Naive thymus-derived CD4-positive, alpha-beta T cell (primary cell): ENCODE measurements at regions of chr10 and their contacts with region 1.

Region 1: GRCh38 chr10:15897287-15897686 is 37.0 kb upstream of the MINDY3 start:
- DNase-seq: no peak
- ATAC-seq: no peak
- H3K4me3 ChIP-seq: no peak overlapping the region
- H3K4me3 Mint-ChIP-seq: no peak overlapping the region
- H3K27ac ChIP-seq: no peak overlapping the region
- H3K27ac Mint-ChIP-seq: no peak overlapping the region
- H3K4me1 ChIP-seq: no peaks in the 10 kb centered on the region
- H3K4me1 Mint-ChIP-seq: no peaks in the 10 kb centered on the region
- H3K27me3 ChIP-seq: no peaks in the 10 kb centered on the region
- H3K27me3 Mint-ChIP-seq: peaks cover 17 to 55% (median 50%) of the 10 kb centered on the region in 5 donors

Region 2: DNA sequence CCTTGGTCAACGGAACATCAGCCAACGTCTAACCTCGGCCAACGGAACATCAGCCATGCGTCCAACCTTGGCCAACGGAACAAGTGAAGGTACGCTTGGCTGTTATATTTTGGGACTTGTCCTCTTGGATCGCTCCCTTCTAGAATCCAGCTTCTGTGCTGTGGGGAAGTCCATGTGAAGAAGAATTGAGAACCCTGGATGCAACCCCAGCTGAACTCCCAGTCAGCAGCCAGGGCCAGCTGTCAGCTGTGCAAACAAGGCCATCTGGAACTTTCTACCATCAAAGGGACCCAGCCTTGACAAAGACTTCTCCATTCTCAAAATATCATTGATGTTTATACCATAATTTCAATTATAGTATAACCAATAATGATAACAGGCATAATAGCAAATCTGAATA is 134.3 kb before region 1 on chr10:
- CTCF ChIA-PET with region 1: no interaction called
- POLR2A ChIA-PET with region 1: no interaction called
- intact Hi-C with region 1: no loop called
- DNase-seq: no peak
- ATAC-seq: no peak
- H3K4me3 ChIP-seq: no peak overlapping the region
- H3K4me3 Mint-ChIP-seq: no peak overlapping the region
- H3K27ac ChIP-seq: no peak overlapping the region
- H3K27ac Mint-ChIP-seq: no peak overlapping the region
- H3K4me1 ChIP-seq: no peaks in the 10 kb centered on the region
- H3K4me1 Mint-ChIP-seq: no peaks in the 10 kb centered on the region
- H3K27me3 ChIP-seq: no peaks in the 10 kb centered on the region
- H3K27me3 Mint-ChIP-seq: peaks cover 0 to 17% (median 5%) of the 10 kb centered on the region in 5 donors

Region 3: GRCh38 chr10:16527452-16527851 is 630.2 kb after region 1 on chr10:
- CTCF ChIA-PET with region 1: no interaction called
- POLR2A ChIA-PET with region 1: no interaction called
- intact Hi-C with region 1: no loop called
- DNase-seq: no peak
- ATAC-seq: no peak
- H3K4me3 ChIP-seq: no peak overlapping the region
- H3K4me3 Mint-ChIP-seq: no peak overlapping the region
- H3K27ac ChIP-seq: no peak overlapping the region
- H3K27ac Mint-ChIP-seq: no peak overlapping the region
- H3K4me1 ChIP-seq: no peaks in the 10 kb centered on the region
- H3K4me1 Mint-ChIP-seq: peaks cover 0 to 2% (median 0%) of the 10 kb centered on the region in 7 donors
- H3K27me3 ChIP-seq: peaks cover 4 to 5% of the 10 kb centered on the region in 2 donors
- H3K27me3 Mint-ChIP-seq: peaks cover 18 to 58% (median 40%) of the 10 kb centered on the region in 5 donors

Region 4: GRCh38 chr10:16545116-16545736 is 647.9 kb after region 1 on chr10:
- CTCF ChIA-PET with region 1: no interaction called
- POLR2A ChIA-PET with region 1: no interaction called
- intact Hi-C with region 1: loop called (anchors 1 to 2 kb)
- DNase-seq: peak in 2 of 9 donors; percentile 19 to 22
- ATAC-seq: no peak
- H3K4me3 ChIP-seq: no peak overlapping the region
- H3K4me3 Mint-ChIP-seq: no peak overlapping the region
- H3K27ac ChIP-seq: no peak overlapping the region
- H3K27ac Mint-ChIP-seq: no peak overlapping the region
- H3K4me1 ChIP-seq: no peaks in the 10 kb centered on the region
- H3K4me1 Mint-ChIP-seq: peaks cover 0 to 6% (median 0%) of the 10 kb centered on the region in 7 donors
- H3K27me3 ChIP-seq: no peaks in the 10 kb centered on the region
- H3K27me3 Mint-ChIP-seq: peaks cover 15 to 48% (median 37%) of the 10 kb centered on the region in 5 donors

Region 5: GRCh38 chr10:16777473-16778370 is 880.4 kb after region 1 on chr10:
- CTCF ChIA-PET with region 1: interaction called, 3 read pairs
- POLR2A ChIA-PET with region 1: no interaction called
- intact Hi-C with region 1: loop called (anchors 1 kb)
- DNase-seq: peak in 7 of 9 donors; percentile 26 to 64 (median 56)
- ATAC-seq: peak; percentile 77
- H3K4me3 ChIP-seq: no peak overlapping the region
- H3K4me3 Mint-ChIP-seq: peak overlapping the region in 4 of 10 donors; percentile 14 to 42 (median 21)
- H3K27ac ChIP-seq: no peak overlapping the region
- H3K27ac Mint-ChIP-seq: peak overlapping the region in 8 of 9 donors; percentile 57 to 89 (median 84)
- H3K4me1 ChIP-seq: peaks cover 0 to 11% of the 10 kb centered on the region in 2 donors
- H3K4me1 Mint-ChIP-seq: peaks cover 20 to 40% (median 32%) of the 10 kb centered on the region in 7 donors
- H3K27me3 ChIP-seq: no peaks in the 10 kb centered on the region
- H3K27me3 Mint-ChIP-seq: no peaks in the 10 kb centered on the region

Region 6: DNA sequence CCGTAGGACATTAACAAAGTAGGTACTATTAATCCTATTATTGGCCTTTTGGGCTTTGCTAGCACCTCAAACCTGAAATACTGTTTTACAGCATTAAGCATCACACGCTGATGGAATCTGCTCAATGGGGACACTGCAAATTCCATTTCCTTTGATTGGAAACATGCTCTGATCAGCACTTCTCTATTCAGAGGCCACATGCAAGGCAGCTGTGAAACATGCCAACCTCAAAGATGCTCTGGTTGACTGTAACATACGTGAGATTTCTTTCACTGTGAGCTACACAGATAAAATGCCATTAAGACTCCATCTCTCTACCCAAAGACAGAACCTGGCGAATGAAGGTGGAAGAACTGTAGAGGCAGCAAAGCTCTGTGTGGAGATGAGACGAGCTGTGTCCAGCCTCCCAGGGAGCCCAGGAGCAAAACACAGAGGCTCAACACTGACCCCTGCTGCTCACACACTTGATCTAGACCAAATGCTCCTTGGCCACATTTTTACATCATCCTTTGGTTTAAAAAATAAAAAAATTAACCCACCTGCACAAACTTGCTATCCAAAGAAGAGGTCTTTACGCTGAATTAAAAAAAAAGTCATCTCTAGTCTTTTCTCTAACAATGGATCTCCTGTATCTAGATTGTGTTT is 911.9 kb after region 1 on chr10:
- CTCF ChIA-PET with region 1: no interaction called
- POLR2A ChIA-PET with region 1: no interaction called
- intact Hi-C with region 1: loop called in 1 of 2 experiments (anchors 1 kb)
- DNase-seq: peak in 3 of 9 donors; percentile 19 to 31 (median 23)
- ATAC-seq: peak; percentile 80
- H3K4me3 ChIP-seq: no peak overlapping the region
- H3K4me3 Mint-ChIP-seq: no peak overlapping the region
- H3K27ac ChIP-seq: no peak overlapping the region
- H3K27ac Mint-ChIP-seq: no peak overlapping the region
- H3K4me1 ChIP-seq: no peaks in the 10 kb centered on the region
- H3K4me1 Mint-ChIP-seq: peaks cover 11 to 41% (median 26%) of the 10 kb centered on the region in 7 donors
- H3K27me3 ChIP-seq: no peaks in the 10 kb centered on the region
- H3K27me3 Mint-ChIP-seq: no peaks in the 10 kb centered on the region